Naive thymus-derived CD4-positive, alpha-beta T cell (primary cell): ENCODE measurements at regions of chr13 and their contacts with region 1.

Region 1: DNA sequence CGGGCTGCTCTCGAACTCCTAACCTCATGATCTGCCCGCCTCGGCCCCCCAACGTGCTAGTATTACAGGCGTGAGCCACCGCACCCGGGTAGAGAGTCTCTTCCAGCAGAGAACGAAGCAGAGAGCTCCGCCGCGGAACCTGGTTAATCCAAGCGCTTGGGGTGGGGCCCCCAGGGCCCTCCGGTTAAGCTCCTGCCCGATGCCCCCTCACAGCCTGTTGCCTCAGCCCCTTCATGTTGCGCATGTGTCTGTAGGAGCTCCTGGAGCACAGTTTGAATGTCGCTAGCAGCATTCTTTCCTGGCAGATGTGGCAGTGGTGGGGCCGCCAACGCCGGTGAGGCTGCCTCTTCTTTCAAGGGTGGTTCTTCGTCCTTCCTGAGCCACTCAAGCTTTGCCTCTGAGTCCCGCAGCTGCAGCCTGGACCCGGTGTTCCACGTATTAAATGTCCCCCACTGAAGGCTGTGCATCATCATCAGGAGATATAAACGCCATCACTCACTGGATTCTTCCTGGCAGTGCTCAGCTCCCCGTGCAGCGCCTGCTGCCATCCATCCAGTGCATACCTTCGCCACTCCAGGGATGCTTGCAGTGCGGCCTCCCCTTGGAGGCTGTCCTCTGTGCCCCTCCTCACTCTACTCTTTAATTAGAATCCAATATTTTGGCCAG is 1919.3 kb downstream of the PCDH9 start:
- DNase-seq: no peak
- ATAC-seq: no peak
- H3K4me3 ChIP-seq: no peak overlapping the region
- H3K4me3 Mint-ChIP-seq: no peak overlapping the region
- H3K27ac ChIP-seq: no peak overlapping the region
- H3K27ac Mint-ChIP-seq: no peak overlapping the region
- H3K4me1 ChIP-seq: no peaks in the 10 kb centered on the region
- H3K4me1 Mint-ChIP-seq: no peaks in the 10 kb centered on the region
- H3K27me3 ChIP-seq: no peaks in the 10 kb centered on the region
- H3K27me3 Mint-ChIP-seq: no peaks in the 10 kb centered on the region

Region 2: DNA sequence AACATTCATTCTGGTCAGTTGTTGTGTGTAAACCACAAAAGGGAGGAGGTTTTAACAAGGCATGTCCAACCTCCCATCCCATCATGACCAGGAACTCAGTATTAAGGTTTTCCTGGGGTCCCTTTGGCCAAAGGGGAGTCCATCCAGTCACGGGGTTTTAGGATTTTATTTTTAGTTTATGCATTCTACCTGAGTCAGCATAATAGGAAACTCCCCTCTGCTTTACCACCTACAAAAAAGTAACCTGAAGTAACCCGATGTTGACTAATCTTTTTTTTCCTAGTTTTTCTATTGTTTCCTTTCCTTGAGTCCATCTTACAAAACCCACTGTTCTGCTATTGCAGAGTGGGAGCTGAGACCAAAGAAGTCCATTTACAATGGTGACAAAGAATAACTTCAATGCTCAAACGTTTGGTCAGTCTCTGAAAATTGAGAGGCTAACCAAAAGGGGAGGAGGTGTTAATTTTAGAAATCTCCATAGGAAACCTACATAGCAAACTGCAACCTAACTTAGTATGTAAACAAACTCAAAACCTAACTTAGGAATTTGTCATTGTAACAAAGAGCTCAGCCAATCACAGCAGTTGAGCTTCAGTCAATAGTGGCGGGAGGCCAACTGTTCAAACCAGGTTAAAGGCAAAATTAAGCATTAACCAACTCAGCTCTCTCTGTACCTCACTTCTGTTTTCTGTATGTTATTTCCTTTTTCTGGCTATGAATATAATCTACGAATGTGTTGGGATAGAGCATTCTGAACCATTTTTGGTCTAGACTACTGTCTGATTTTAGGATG is 34.8 kb before region 1 on chr13:
- CTCF ChIA-PET with region 1: no interaction called
- POLR2A ChIA-PET with region 1: no interaction called
- intact Hi-C with region 1: loop called in 1 of 2 experiments (anchors 1 kb)
- DNase-seq: no peak
- ATAC-seq: no peak
- H3K4me3 ChIP-seq: no peak overlapping the region
- H3K4me3 Mint-ChIP-seq: no peak overlapping the region
- H3K27ac ChIP-seq: no peak overlapping the region
- H3K27ac Mint-ChIP-seq: no peak overlapping the region
- H3K4me1 ChIP-seq: no peaks in the 10 kb centered on the region
- H3K4me1 Mint-ChIP-seq: no peaks in the 10 kb centered on the region
- H3K27me3 ChIP-seq: no peaks in the 10 kb centered on the region
- H3K27me3 Mint-ChIP-seq: no peaks in the 10 kb centered on the region